Dendritic cell treated with granulocyte-macrophage colony-stimulating factor and Interleukin-4, amounts not matched to agents 40 ng/mL and 50 ng/mL, for 4 days (primary cell): ENCODE measurements at regions of chr5 and their contacts with region 1.

Region 1: GRCh38 chr5:150751096-150751891 is 7.5 kb downstream of the DCTN4 start:
- H3K4me3 Mint-ChIP-seq: no peak overlapping the region
- H3K27ac Mint-ChIP-seq: no peak overlapping the region
- H3K4me1 Mint-ChIP-seq: peaks cover 16% of the 10 kb centered on the region
- H3K27me3 Mint-ChIP-seq: no peaks in the 10 kb centered on the region

Region 2: DNA sequence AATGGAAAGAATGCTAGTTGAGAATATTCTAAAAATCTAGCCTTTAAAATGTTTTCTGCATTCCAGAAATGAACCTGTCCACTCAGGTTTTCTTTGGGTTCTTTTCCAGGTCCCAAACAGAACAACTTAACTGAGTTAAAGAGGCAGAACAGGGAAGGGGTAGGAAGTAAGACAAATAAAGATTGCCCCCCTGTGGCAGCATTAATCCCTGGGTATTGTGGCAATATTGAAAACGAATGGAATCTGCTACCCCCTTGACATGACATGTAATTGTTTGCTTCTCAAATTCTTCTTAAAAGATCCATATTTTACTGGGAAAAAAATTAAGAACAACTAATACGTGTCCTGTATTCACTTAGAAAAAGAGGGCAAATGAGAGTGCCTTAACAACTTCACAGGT is 41.1 kb before region 1 on chr5:
- intact Hi-C with region 1: loop called (anchors 5 kb)
- H3K4me3 Mint-ChIP-seq: no peak overlapping the region
- H3K27ac Mint-ChIP-seq: no peak overlapping the region
- H3K4me1 Mint-ChIP-seq: no peaks in the 10 kb centered on the region
- H3K27me3 Mint-ChIP-seq: no peaks in the 10 kb centered on the region

Region 3: GRCh38 chr5:151115274-151115905 is 364.1 kb after region 1 on chr5:
- intact Hi-C with region 1: no loop called
- H3K4me3 Mint-ChIP-seq: no peak overlapping the region
- H3K27ac Mint-ChIP-seq: no peak overlapping the region
- H3K4me1 Mint-ChIP-seq: no peaks in the 10 kb centered on the region
- H3K27me3 Mint-ChIP-seq: no peaks in the 10 kb centered on the region